ENCODE measurements at regions of chr4 and their contacts with region 1.

Region 1: GRCh38 chr4:139177868-139178611 is 1.0 kb upstream of the ELF2 start:
- DNase-seq: peak; percentile 98
- H3K4me3 ChIP-seq: peak overlapping the region; percentile 83 to 99 (median 96)
- H3K27ac ChIP-seq: peak overlapping the region; percentile 99 to 100 (median 100)
- H3K4me1 ChIP-seq: peaks cover 0 to 32% (median 16%) of the 10 kb centered on the region in 4 donors
- H3K27me3 ChIP-seq: no peaks in the 10 kb centered on the region
- CTCF ChIP-seq: no peak
- EP300 ChIP-seq: peak in 2 of 4 donors; percentile 65 to 74
- POLR2A ChIP-seq: peak; percentile 58 to 83

Region 2: GRCh38 chr4:139083956-139084803 is 93.9 kb before region 1 on chr4:
- intact Hi-C with region 1: loop called (anchors 2 kb)
- DNase-seq: peak; percentile 94
- H3K4me3 ChIP-seq: peak overlapping the region; percentile 70 to 92 (median 79)
- H3K27ac ChIP-seq: peak overlapping the region; percentile 92 to 97 (median 94)
- H3K4me1 ChIP-seq: peaks cover 0 to 43% (median 37%) of the 10 kb centered on the region in 4 donors
- H3K27me3 ChIP-seq: no peaks in the 10 kb centered on the region
- CTCF ChIP-seq: peak in 1 of 4 experiments; percentile 27
- EP300 ChIP-seq: no peak
- POLR2A ChIP-seq: peak; percentile 43 to 57

Region 3: GRCh38 chr4:139099366-139099982 is 78.6 kb before region 1 on chr4:
- intact Hi-C with region 1: loop called (anchors 5 kb)
- DNase-seq: peak; percentile 82
- H3K4me3 ChIP-seq: no peak overlapping the region
- H3K27ac ChIP-seq: no peak overlapping the region
- H3K4me1 ChIP-seq: peaks cover 0 to 7% (median 0%) of the 10 kb centered on the region in 4 donors
- H3K27me3 ChIP-seq: no peaks in the 10 kb centered on the region
- CTCF ChIP-seq: peak; percentile 56 to 88 (median 74)
- EP300 ChIP-seq: no peak
- POLR2A ChIP-seq: no peak

Region 4: GRCh38 chr4:139301113-139301820 is 123.2 kb after region 1 on chr4 and contains the start of gene NAA15:
- intact Hi-C with region 1: loop called (anchors 2 kb)
- DNase-seq: peak; percentile 99
- H3K4me3 ChIP-seq: peak within 1 kb of the TSS; percentile 87 to 99 (median 96)
- H3K27ac ChIP-seq: peak within 1 kb of the TSS; percentile 93 to 98 (median 96)
- H3K4me1 ChIP-seq: peaks cover 0 to 60% (median 35%) of the 10 kb centered on the region in 4 donors
- H3K27me3 ChIP-seq: no peaks in the 10 kb centered on the region
- CTCF ChIP-seq: no peak
- EP300 ChIP-seq: peak in 1 of 4 donors; percentile 68
- POLR2A ChIP-seq: peak; percentile 87
- total RNA-seq, gene NAA15: 21.6 to 40.3 (median 28.9) TPM

Region 5: GRCh38 chr4:139453371-139454110 is 275.5 kb after region 1 on chr4:
- intact Hi-C with region 1: loop called (anchors 5 kb)
- DNase-seq: peak; percentile 99
- H3K4me3 ChIP-seq: peak overlapping the region; percentile 80 to 91 (median 87)
- H3K27ac ChIP-seq: peak overlapping the region; percentile 92 to 98 (median 94)
- H3K4me1 ChIP-seq: peaks cover 0 to 47% (median 32%) of the 10 kb centered on the region in 4 donors
- H3K27me3 ChIP-seq: no peaks in the 10 kb centered on the region
- CTCF ChIP-seq: peak in 1 of 4 experiments; percentile 8
- EP300 ChIP-seq: no peak
- POLR2A ChIP-seq: peak; percentile 80 to 83

Measured in sigmoid colon (tissue), 7 donors.